Dorsolateral prefrontal cortex (tissue), 120 donors: ENCODE measurements at regions of chr22 and their contacts with region 1.

Region 1: DNA sequence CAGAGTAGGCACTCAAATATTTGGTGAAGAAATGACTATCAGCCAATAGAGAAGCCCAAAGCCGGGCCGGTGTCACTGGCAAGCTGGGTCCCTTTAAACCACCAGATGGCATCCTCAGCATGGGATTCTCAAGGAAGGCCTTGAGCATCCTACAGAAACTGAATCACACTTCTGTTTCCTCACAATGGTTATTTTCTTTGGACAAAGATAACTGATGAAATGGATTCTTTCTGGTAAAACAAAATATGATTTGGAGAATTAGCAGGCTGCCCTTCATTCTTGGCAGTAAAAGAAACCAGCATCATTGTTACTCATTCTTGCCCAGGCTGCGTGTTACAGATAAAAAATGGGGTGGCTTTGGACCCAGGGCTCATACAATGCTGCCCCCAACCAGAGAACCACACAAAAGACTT is 30.3 kb upstream of the ASPHD2 start:
- DNase-seq: peak; percentile 40 to 86 (median 68)
- H3K4me3 ChIP-seq: no peak overlapping the region
- H3K27ac ChIP-seq: peak overlapping the region in 15 of 59 donors; percentile 4 to 65 (median 40)
- H3K27me3 ChIP-seq: no peaks in the 10 kb centered on the region
- CTCF ChIP-seq: peak in 55 of 56 donors; percentile 48 to 89 (median 76)

Region 2: GRCh38 chr22:26461188-26461810 is 62.6 kb after region 1 on chr22:
- intact Hi-C with region 1: loop called (anchors 1 to 5 kb)
- DNase-seq: peak in 7 of 10 donors; percentile 59 to 78 (median 66)
- H3K4me3 ChIP-seq: peak overlapping the region in 2 of 59 donors; percentile 1 to 9
- H3K27ac ChIP-seq: peak overlapping the region in 16 of 59 donors; percentile 1 to 90 (median 54)
- H3K27me3 ChIP-seq: no peaks in the 10 kb centered on the region
- CTCF ChIP-seq: peak; percentile 53 to 87 (median 78)

Region 3: DNA sequence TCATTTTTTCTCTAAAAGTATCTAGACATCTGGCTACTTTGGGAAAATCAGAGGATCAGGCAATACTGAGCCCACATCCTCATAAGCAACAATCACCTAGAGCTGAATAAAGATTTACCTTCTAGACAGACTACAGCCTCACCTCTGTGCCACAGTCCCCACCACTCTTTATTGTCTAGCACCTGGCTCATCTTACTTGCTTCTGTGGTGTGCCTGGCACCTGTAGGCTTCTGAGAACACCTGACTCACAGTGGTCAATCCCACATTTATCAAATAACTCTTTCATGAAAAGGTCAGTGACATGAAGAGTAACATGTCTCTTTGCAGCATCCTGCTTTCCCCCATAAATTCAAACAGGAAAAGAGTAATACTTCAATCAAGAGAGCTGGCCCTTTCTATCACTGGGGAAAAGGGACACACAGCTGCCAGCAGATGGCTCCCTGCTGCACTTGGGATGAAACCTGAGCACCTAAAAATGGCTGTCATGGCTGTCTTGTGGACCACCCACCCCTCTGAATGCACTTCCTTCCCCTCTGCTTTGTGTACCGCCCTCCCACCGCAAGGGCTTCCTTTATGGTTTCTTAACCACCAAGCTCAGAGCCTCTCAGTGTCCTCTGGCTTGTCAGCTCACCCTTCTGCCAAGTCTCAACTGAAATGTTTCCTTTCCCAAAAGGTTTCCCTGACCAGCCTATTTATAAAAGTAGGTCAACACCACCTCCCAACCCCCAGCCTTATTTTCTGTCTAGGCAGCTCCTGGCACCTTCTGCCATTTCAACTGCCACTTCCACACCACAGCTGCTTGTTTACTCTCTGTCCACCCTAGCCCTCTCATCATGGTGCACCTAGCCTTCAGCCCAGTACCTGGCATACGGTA is 104.2 kb after region 1 on chr22:
- intact Hi-C with region 1: no loop called
- DNase-seq: peak in 2 of 10 donors; percentile 50 to 57
- H3K4me3 ChIP-seq: peak overlapping the region in 1 of 59 donors; percentile 23
- H3K27ac ChIP-seq: peak overlapping the region in 48 of 59 donors; percentile 3 to 80 (median 57)
- H3K27me3 ChIP-seq: no peaks in the 10 kb centered on the region
- CTCF ChIP-seq: peak in 55 of 56 donors; percentile 24 to 69 (median 53)